Sigmoid colon (tissue), 7 donors: ENCODE measurements at regions of chr7 and their contacts with region 1.

Region 1: GRCh38 chr7:55280031-55280454 is 85.1 kb upstream of the LANCL2 start:
- DNase-seq: no peak
- H3K4me3 ChIP-seq: no peak overlapping the region
- H3K27ac ChIP-seq: no peak overlapping the region
- H3K4me1 ChIP-seq: no peaks in the 10 kb centered on the region
- H3K27me3 ChIP-seq: no peaks in the 10 kb centered on the region
- CTCF ChIP-seq: peak in 3 of 4 experiments; percentile 47 to 57 (median 52)
- EP300 ChIP-seq: no peak
- POLR2A ChIP-seq: no peak

Region 2: GRCh38 chr7:54563329-54563916 is 716.6 kb before region 1 on chr7:
- intact Hi-C with region 1: no loop called
- DNase-seq: no peak
- H3K4me3 ChIP-seq: no peak overlapping the region
- H3K27ac ChIP-seq: no peak overlapping the region
- H3K4me1 ChIP-seq: no peaks in the 10 kb centered on the region
- H3K27me3 ChIP-seq: no peaks in the 10 kb centered on the region
- CTCF ChIP-seq: no peak
- EP300 ChIP-seq: no peak
- POLR2A ChIP-seq: no peak

Region 3: GRCh38 chr7:55409482-55410225 is 129.6 kb after region 1 on chr7:
- intact Hi-C with region 1: loop called (anchors 1 kb)
- DNase-seq: no peak
- H3K4me3 ChIP-seq: no peak overlapping the region
- H3K27ac ChIP-seq: no peak overlapping the region
- H3K4me1 ChIP-seq: no peaks in the 10 kb centered on the region
- H3K27me3 ChIP-seq: no peaks in the 10 kb centered on the region
- CTCF ChIP-seq: no peak
- EP300 ChIP-seq: no peak
- POLR2A ChIP-seq: no peak

Region 4: DNA sequence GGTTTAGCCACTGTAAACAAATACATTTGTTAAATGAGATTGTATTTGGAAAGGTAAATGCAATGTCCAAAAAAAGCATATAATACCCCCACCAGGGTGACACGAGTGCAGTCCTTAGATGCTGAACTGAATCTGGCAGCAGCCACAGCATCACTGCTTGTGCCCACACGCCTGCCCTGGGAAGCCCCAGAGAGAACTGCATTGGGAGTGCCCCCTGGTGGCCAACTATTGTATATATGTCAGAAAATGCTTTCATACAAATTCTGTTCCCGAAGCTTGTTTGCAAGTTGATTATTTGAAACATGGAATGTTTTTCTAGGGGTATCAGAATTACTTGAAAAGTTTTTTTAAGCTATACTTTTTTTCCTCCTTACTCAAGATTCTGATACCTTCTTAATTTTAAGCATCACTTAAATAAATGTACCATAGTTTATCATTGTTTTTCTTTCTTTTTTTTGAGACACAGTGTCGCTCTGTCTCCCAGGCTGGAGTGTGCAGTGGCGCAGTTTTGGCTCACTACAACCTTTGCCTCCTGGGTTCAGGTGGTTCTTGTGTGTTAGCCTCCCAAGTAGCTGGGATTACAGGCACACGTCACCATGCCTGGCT is 135.2 kb after region 1 on chr7:
- intact Hi-C with region 1: loop called (anchors 1 kb)
- DNase-seq: peak; percentile 81
- H3K4me3 ChIP-seq: no peak overlapping the region
- H3K27ac ChIP-seq: no peak overlapping the region
- H3K4me1 ChIP-seq: no peaks in the 10 kb centered on the region
- H3K27me3 ChIP-seq: no peaks in the 10 kb centered on the region
- CTCF ChIP-seq: peak; percentile 59 to 85 (median 70)
- EP300 ChIP-seq: no peak
- POLR2A ChIP-seq: no peak